Tibial artery (tissue), 4 donors: ENCODE measurements at regions of chr13 and their contacts with region 1.

Region 1: DNA sequence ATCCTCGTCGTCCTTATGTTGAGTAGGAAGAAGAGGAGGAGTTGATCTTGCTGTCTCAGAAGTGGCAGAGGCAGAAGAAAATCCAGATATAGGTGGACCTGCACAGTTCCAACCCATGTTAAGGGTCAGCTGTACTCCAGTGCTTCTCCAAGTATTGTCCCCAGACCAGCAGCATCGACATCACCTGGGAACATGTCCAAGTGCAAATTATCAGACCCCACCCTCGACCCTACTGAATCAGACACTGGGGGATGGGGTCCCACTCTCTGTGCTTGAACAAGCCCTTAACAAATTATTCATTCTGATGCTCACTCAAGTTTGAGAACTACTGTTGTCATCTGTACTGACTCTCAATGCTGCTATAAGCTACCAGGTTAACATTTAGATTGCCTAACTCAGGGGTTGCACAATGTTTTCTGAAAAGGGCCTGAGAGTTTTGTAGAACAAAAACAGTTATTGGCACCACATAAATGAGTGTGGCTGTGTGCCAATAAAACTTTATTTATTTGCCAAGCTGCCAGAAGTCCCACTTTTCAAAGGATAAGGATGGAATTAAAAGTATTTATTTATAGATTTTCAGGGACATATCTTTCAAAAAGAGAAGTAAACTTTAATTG is 226.7 kb upstream of the IPO5 start:
- DNase-seq: no peak
- H3K4me3 ChIP-seq: no peak overlapping the region
- H3K27ac ChIP-seq: peak overlapping the region; percentile 37 to 50
- H3K4me1 ChIP-seq: peaks cover 0 to 26% (median 2%) of the 10 kb centered on the region in 4 donors
- H3K27me3 ChIP-seq: no peaks in the 10 kb centered on the region
- CTCF ChIP-seq: no peak

Region 2: GRCh38 chr13:97648171-97648880 is 78.4 kb before region 1 on chr13:
- intact Hi-C with region 1: no loop called
- DNase-seq: no peak
- H3K4me3 ChIP-seq: no peak overlapping the region
- H3K27ac ChIP-seq: no peak overlapping the region
- H3K4me1 ChIP-seq: no peaks in the 10 kb centered on the region
- H3K27me3 ChIP-seq: no peaks in the 10 kb centered on the region
- CTCF ChIP-seq: no peak

Region 3: DNA sequence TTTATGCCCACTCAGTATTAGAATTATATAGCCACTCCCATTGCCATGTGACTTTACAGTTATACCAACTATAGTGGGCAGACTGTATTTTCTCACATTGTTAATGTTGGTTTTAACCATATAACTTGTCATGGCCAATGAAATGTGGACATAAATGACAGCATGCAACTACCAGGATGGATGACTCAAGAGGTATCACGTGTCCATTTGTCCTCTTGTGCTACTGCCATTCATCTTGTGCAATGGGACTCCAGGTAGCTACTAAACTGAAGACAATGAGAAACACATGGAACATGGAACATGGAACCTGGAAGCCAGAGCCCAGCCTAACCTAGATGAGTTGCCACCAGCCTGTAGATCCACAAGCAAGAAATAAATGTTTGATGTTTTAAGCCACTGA is 16.0 kb before region 1 on chr13:
- intact Hi-C with region 1: no loop called
- DNase-seq: no peak
- H3K4me3 ChIP-seq: no peak overlapping the region
- H3K27ac ChIP-seq: no peak overlapping the region
- H3K4me1 ChIP-seq: no peaks in the 10 kb centered on the region
- H3K27me3 ChIP-seq: no peaks in the 10 kb centered on the region
- CTCF ChIP-seq: no peak

Region 4: GRCh38 chr13:97781891-97782305 is 55.1 kb after region 1 on chr13:
- intact Hi-C with region 1: loop called (anchors 5 kb)
- DNase-seq: peak; percentile 76 to 81
- H3K4me3 ChIP-seq: no peak overlapping the region
- H3K27ac ChIP-seq: peak overlapping the region; percentile 44 to 82
- H3K4me1 ChIP-seq: peaks cover 0 to 6% (median 2%) of the 10 kb centered on the region in 4 donors
- H3K27me3 ChIP-seq: no peaks in the 10 kb centered on the region
- CTCF ChIP-seq: no peak